Activated B cell treated with CpG ODN at 0.5 μM for 24 hours (primary cell): ENCODE measurements at regions of chr6 and their contacts with region 1.

Region 1: DNA sequence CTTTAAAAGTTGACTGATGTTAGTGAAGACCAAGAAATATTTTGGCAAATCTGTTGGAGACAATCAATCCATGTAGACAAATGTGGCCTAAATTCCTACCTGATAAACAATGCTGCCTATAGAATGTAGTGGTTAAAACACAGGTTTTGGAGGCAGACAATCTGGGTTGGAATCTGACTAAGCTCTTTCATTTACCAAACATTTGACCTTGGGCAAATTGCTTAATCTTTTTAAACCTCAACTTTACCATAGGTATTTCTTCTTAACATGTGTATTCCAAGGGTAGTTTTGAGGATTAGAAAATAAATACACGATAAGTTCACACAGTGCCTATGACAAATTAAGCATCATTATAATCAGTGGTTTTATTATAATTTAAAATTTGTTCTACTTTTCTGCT is 11.5 kb downstream of the RHAG start:
- DNase-seq: no peak
- ATAC-seq: no peak
- H3K4me3 Mint-ChIP-seq: no peak overlapping the region
- H3K27ac Mint-ChIP-seq: no peak overlapping the region
- H3K4me1 Mint-ChIP-seq: no peaks in the 10 kb centered on the region
- H3K27me3 Mint-ChIP-seq: no peaks in the 10 kb centered on the region
- CTCF ChIP-seq: no peak

Region 2: DNA sequence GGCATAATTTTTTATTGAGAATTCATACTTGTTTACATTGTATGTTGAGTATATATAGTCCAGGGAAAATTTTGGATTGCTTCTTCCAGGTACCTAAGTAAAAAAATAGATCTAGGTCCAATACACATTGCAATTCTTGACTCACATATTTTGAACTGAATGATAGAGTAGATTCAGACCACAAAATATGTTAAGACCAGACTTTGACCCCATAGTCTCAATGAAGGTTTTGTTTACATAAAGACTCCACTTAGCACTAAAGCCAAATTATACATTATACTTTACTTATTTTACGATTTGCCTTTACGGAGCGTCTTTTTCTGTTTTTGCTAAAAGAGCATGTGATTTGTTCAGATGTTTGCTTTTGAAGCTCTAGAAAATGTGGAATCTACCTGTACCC is 1370.0 kb before region 1 on chr6:
- CTCF ChIA-PET with region 1: no interaction called
- POLR2A ChIA-PET with region 1: no interaction called
- intact Hi-C with region 1: no loop called
- DNase-seq: no peak
- ATAC-seq: no peak
- H3K4me3 Mint-ChIP-seq: no peak overlapping the region
- H3K27ac Mint-ChIP-seq: no peak overlapping the region
- H3K4me1 Mint-ChIP-seq: no peaks in the 10 kb centered on the region
- H3K27me3 Mint-ChIP-seq: no peaks in the 10 kb centered on the region
- CTCF ChIP-seq: no peak

Region 3: DNA sequence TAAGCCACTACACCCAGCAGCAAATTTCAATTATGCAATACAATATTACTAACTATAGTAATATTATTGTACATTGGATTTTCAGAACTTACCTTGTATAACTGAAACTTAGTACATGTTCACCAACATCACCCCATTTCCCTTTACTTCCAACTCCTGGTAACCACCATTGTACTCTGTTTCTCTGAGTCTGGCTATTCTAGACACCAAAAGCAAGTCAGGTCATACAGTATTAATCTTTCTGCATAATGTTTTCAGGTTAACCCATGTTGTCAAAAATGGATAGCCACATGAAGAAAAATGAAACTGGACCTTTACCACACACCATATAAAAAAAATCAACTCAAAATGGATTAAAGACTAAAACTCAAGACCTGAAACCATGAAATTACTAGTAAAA is 720.3 kb before region 1 on chr6:
- CTCF ChIA-PET with region 1: no interaction called
- POLR2A ChIA-PET with region 1: no interaction called
- intact Hi-C with region 1: no loop called
- DNase-seq: no peak
- ATAC-seq: no peak
- H3K4me3 Mint-ChIP-seq: no peak overlapping the region
- H3K27ac Mint-ChIP-seq: no peak overlapping the region
- H3K4me1 Mint-ChIP-seq: no peaks in the 10 kb centered on the region
- H3K27me3 Mint-ChIP-seq: no peaks in the 10 kb centered on the region
- CTCF ChIP-seq: no peak

Region 4: DNA sequence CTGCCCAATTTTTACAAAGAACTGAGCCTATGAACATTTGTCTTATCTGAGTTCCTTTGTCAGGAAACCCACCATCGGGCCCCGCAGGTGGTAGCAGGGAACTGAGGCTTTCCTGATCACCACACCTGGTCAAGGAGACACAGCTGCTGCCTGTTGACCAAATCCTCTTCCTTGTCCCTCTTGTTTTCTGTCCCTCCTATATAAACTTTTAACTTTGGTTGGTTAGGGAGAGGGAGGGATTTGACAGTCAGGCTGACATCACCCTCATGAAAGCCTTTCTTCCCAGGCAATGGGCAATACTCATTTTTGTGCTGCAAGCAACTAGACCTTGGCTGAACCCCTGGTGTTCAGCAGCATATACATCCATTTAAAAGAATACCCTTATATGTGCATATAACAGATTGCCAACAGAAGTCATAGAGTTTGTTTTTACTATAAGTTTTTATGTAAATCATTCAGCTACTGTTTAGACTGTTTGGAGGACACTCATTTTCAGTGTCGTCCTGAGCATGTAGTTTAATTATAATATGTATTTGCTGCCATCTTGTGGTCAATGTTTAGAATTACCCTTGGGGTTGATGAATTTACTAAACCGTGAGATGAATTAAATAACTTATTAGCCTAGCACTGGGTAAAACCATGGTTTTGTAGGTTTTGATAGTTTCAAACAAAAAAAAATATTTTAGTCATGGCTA is 224.2 kb after region 1 on chr6:
- CTCF ChIA-PET with region 1: no interaction called
- POLR2A ChIA-PET with region 1: no interaction called
- intact Hi-C with region 1: loop called (anchors 1 kb)
- DNase-seq: no peak
- ATAC-seq: no peak
- H3K4me3 Mint-ChIP-seq: no peak overlapping the region
- H3K27ac Mint-ChIP-seq: no peak overlapping the region
- H3K4me1 Mint-ChIP-seq: no peaks in the 10 kb centered on the region
- H3K27me3 Mint-ChIP-seq: no peaks in the 10 kb centered on the region
- CTCF ChIP-seq: no peak